ENCODE measurements at regions of chr6 and their contacts with region 1.

Region 1: GRCh38 chr6:42043787-42044475 is 6.4 kb upstream of the TAF8 start:
- DNase-seq: peak; percentile 66 to 98
- H3K4me3 ChIP-seq: no peak overlapping the region
- H3K27ac ChIP-seq: no peak overlapping the region
- H3K4me1 ChIP-seq: peaks cover 9 to 23% (median 13%) of the 10 kb centered on the region in 4 experiments
- H3K27me3 ChIP-seq: peaks cover 34 to 60% (median 51%) of the 10 kb centered on the region in 4 experiments
- CTCF ChIP-seq: peak in 2 of 3 experiments; percentile 97 to 98; a peak in 3 of 4 replicates
- EP300 ChIP-seq: no peak
- POLR2A ChIP-seq: no peak
- RAD21 ChIP-seq: peak; percentile 100

Region 2: GRCh38 chr6:41503841-41504465 is 540.0 kb before region 1 on chr6:
- CTCF ChIA-PET with region 1: no interaction called
- POLR2A ChIA-PET with region 1: no interaction called
- DNase-seq: peak in 1 of 2 experiments; percentile 66
- H3K4me3 ChIP-seq: peak overlapping the region; percentile 7 to 61 (median 36); a peak in 7 of 8 replicates
- H3K27ac ChIP-seq: no peak overlapping the region
- H3K4me1 ChIP-seq: peaks cover 4 to 23% (median 9%) of the 10 kb centered on the region in 4 experiments
- H3K27me3 ChIP-seq: peaks cover 32 to 66% (median 60%) of the 10 kb centered on the region in 4 experiments
- CTCF ChIP-seq: no peak
- EP300 ChIP-seq: no peak
- POLR2A ChIP-seq: no peak
- RAD21 ChIP-seq: no peak

Region 3: DNA sequence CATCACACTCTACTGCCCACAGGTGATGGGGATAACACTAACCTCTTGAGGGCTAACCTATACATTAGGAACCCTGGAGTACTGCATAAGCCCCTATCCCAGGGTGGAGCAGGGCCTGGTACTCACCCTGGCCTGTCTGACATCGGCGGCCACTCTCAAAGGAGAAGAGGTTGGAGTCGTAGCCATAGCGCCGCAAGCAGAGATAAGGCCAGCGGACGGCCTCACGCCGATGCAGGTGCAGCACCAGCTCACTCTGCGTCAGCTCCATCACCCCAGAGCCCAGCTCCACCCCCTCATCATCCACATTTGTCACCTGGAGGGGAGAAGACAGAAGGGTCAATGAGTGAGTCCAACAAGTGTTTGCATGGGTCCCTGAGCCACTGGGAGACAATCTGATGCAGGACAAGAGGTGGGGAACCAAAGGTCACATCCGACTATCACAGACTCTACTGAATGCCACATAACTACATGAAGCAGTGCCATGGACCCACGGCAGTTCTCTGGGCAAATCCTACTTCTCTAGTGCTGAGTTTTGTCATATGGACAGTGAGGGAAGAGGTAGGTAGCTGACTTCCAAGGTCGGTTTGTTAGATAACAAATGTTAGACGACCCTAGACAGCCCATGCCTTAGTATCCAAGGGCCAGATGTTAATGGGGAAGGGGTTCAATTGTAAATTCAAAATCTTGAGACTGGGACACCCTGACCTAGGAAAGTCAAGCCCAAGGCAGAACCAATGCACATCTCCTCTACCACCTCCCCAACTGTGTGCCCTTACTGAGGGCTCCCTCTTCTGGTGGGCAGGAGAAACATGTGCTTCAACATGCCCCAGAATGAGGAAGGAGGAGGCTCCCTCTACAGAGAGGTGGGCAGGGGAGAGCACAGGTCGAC is 268.4 kb before region 1 on chr6:
- CTCF ChIA-PET with region 1: interaction called, 14 read pairs
- POLR2A ChIA-PET with region 1: no interaction called
- DNase-seq: peak; percentile 38 to 57
- H3K4me3 ChIP-seq: no peak overlapping the region
- H3K27ac ChIP-seq: no peak overlapping the region
- H3K4me1 ChIP-seq: peaks cover 0 to 5% (median 3%) of the 10 kb centered on the region in 4 experiments; a peak in 1 of 7 replicates
- H3K27me3 ChIP-seq: no peaks in the 10 kb centered on the region; a peak in 1 of 7 replicates
- CTCF ChIP-seq: peak; percentile 96 to 98 (median 98)
- EP300 ChIP-seq: no peak
- POLR2A ChIP-seq: no peak
- RAD21 ChIP-seq: peak; percentile 87 to 92

Region 4: DNA sequence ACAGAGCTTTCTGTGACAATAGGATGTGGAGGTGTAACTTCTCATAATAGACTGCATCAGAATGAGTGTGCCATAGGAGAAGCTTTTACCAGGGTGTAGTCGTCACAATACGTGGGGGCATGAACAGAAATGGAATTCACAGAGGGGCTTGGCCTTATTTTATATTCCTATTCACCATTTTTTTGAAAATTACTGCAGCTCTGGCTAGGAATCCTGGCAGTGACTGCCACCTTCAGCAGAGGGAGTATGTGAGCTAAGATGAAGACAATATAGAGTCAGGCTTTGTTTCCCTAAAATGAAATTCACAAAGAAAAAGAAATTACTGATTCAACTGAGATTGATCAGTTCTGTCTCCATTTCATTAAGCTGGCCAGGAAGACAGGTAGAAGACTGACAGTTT is 242.6 kb before region 1 on chr6:
- CTCF ChIA-PET with region 1: interaction called, 24 read pairs
- POLR2A ChIA-PET with region 1: interaction called, 3 read pairs
- DNase-seq: no peak
- H3K4me3 ChIP-seq: no peak overlapping the region
- H3K27ac ChIP-seq: no peak overlapping the region
- H3K4me1 ChIP-seq: no peaks in the 10 kb centered on the region
- H3K27me3 ChIP-seq: no peaks in the 10 kb centered on the region
- CTCF ChIP-seq: peak in 2 of 3 experiments; percentile 35 to 41; a peak in 2 of 4 replicates
- EP300 ChIP-seq: no peak
- POLR2A ChIP-seq: no peak
- RAD21 ChIP-seq: peak; percentile 47 to 57

Region 5: DNA sequence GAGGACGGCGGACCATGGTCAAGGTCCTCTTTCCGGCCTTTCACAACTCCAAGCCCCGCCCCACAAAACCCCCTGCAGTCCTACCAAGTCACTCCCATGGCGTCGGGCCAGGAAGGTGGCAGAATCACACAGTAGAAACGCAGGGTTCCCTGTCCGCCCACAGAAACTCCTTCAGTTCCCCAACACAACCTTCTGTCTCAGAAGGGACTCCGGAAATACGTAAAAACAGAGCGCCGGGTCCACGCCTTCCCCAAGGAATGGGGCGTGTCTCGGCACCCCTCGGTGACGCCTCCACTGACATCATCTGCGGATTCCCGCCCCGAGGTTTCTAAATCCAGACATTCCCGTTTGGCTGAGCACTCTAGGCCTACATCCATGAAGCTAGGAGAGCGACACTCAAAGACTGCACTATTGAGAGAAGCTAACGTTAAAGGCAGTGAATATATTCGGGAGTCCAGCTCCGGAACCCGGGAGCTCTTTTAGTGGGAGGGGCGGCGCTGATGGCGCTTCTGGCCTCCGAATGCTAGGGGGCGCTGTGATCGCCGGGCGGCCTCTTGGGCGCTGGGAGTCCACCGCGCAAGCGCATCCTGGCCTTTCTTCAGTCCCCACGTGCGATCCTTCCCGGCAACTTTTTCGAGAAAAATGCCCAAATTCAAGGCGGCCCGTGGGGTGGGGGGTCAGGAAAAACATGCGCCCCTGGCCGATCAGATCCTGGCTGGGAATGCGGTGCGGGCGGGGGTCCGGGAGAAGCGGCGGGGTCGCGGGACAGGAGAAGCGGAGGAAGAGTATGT is 122.8 kb before region 1 on chr6 and contains the starts of genes BYSL and MED20:
- CTCF ChIA-PET with region 1: interaction called, 50 read pairs
- POLR2A ChIA-PET with region 1: interaction called, 38 read pairs
- DNase-seq: peak; percentile 75 to 97
- H3K4me3 ChIP-seq: peak within 1 kb of the TSS; percentile 79 to 98 (median 87)
- H3K27ac ChIP-seq: peak within 1 kb of the TSS; percentile 98
- H3K4me1 ChIP-seq: peaks cover 1 to 11% (median 4%) of the 10 kb centered on the region in 4 experiments; a peak in 3 of 7 replicates
- H3K27me3 ChIP-seq: no peaks in the 10 kb centered on the region
- CTCF ChIP-seq: peak; percentile 78 to 88 (median 83)
- EP300 ChIP-seq: no peak
- POLR2A ChIP-seq: peak; percentile 64 to 80; a peak in 2 of 3 replicates
- RAD21 ChIP-seq: peak; percentile 4 to 33; a peak in 3 of 4 replicates
- total RNA-seq, gene BYSL: 43.9 and 49.2 TPM in 2 replicates
- total RNA-seq, gene MED20: 38.7 and 42.9 TPM in 2 replicates

Region 6: GRCh38 chr6:41941280-41942066 is 102.5 kb before region 1 on chr6 and contains the start of gene CCND3:
- CTCF ChIA-PET with region 1: interaction called, 219 read pairs
- POLR2A ChIA-PET with region 1: interaction called, 157 read pairs
- DNase-seq: peak in 1 of 2 experiments; percentile 83
- H3K4me3 ChIP-seq: peak within 1 kb of the TSS; percentile 69 to 91 (median 84)
- H3K27ac ChIP-seq: no peak within 1 kb of the TSS
- H3K4me1 ChIP-seq: peaks cover 6 to 28% (median 23%) of the 10 kb centered on the region in 4 experiments
- H3K27me3 ChIP-seq: no peaks in the 10 kb centered on the region
- CTCF ChIP-seq: no peak
- EP300 ChIP-seq: no peak
- POLR2A ChIP-seq: no peak
- RAD21 ChIP-seq: 0 out of 4 replicates have a peak, but pooled peaks of 1 of the 2 experiments have one; percentile 6
- total RNA-seq, gene CCND3: 28.4 and 32.9 TPM in 2 replicates

Region 7: GRCh38 chr6:41966961-41967311 is 77.0 kb before region 1 on chr6:
- CTCF ChIA-PET with region 1: interaction called, 14 read pairs
- POLR2A ChIA-PET with region 1: interaction called, 4 read pairs
- DNase-seq: no peak
- H3K4me3 ChIP-seq: no peak overlapping the region; a peak in 1 of 8 replicates
- H3K27ac ChIP-seq: no peak overlapping the region
- H3K4me1 ChIP-seq: peaks cover 15 to 28% (median 23%) of the 10 kb centered on the region in 4 experiments
- H3K27me3 ChIP-seq: no peaks in the 10 kb centered on the region; a peak in 1 of 7 replicates
- CTCF ChIP-seq: no peak
- EP300 ChIP-seq: no peak
- POLR2A ChIP-seq: no peak
- RAD21 ChIP-seq: no peak

Region 8: DNA sequence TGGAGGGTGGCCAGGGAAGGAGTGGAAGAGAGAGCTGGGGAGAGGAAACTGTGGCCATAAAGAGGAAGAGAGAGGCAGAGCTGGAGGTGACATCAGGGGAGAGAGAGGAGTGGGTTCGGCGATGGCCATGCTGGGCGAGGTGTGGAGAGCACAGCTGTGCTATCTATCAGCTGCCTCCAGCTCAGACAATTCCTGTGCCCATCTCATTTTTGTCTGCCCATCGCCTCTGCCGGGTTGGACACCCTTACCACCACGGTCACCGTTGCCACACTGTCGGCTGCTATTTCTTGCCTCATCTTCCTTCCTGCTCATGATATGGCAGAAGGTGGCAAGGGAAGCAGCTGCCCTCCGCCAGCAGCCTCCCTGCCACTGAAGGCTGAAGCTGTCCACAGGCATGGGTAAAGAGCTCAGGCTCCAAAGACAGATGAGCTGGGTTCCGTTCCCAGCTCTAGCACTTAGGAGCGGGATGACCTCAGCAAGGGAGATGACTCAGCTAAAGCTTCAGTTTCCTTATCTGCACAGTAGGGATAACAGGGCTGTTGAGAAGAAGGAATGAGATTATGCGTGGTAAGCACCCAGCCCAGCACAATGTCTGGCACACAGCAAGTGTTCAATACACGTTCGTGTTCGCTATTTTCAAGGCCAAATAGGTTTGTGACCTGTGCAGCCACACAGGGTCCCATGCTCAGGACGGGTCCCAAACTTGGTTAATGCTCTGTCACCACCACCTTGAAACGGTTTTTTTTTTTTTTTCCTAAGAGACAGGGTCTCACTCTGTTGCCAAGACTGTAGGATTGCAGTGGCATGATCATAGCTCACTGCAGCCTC is 15.5 kb before region 1 on chr6:
- CTCF ChIA-PET with region 1: interaction called, 56 read pairs
- POLR2A ChIA-PET with region 1: interaction called, 5 read pairs
- DNase-seq: no peak
- H3K4me3 ChIP-seq: no peak overlapping the region
- H3K27ac ChIP-seq: no peak overlapping the region
- H3K4me1 ChIP-seq: peaks cover 4 to 8% (median 7%) of the 10 kb centered on the region in 4 experiments; a peak in 5 of 7 replicates
- H3K27me3 ChIP-seq: peaks cover 0 to 2% (median 0%) of the 10 kb centered on the region in 4 experiments; a peak in 1 of 7 replicates
- CTCF ChIP-seq: no peak
- EP300 ChIP-seq: no peak
- POLR2A ChIP-seq: no peak
- RAD21 ChIP-seq: no peak